ENCODE measurements at regions of chr22 and their contacts with region 1.

Region 1: GRCh38 chr22:42688241-42689211 is 32.1 kb downstream of the A4GALT start:
- DNase-seq: peak; percentile 92 to 96 (median 94)
- ATAC-seq: peak; percentile 85 to 87
- H3K4me3 ChIP-seq: no peak overlapping the region
- H3K27ac ChIP-seq: peak overlapping the region; percentile 97
- H3K4me1 ChIP-seq: peaks cover 38% of the 10 kb centered on the region
- H3K27me3 ChIP-seq: no peaks in the 10 kb centered on the region

Region 2: GRCh38 chr22:42720263-42721044 is 31.9 kb after region 1 on chr22 and contains the start of gene A4GALT:
- intact Hi-C with region 1: loop called in 1 of 4 experiments (anchors 5 kb)
- DNase-seq: peak; percentile 43 to 82 (median 80)
- ATAC-seq: peak; percentile 71 to 75
- H3K4me3 ChIP-seq: peak within 1 kb of the TSS; percentile 92
- H3K27ac ChIP-seq: peak within 1 kb of the TSS; percentile 84
- H3K4me1 ChIP-seq: peaks cover 12% of the 10 kb centered on the region
- H3K27me3 ChIP-seq: no peaks in the 10 kb centered on the region
- total RNA-seq, gene A4GALT: 74.3 to 103 (median 86.8) TPM

Measured in right cardiac atrium (tissue), 5 donors.